Common myeloid progenitor, CD34-positive (primary cell): ENCODE measurements at regions of chr14 and their contacts with region 1.

Region 1: GRCh38 chr14:77988970-77989369 is 181.2 kb upstream of the NRXN3 start:
- DNase-seq: no peak
- H3K4me3 ChIP-seq: no peak overlapping the region
- H3K27ac ChIP-seq: no peak overlapping the region
- H3K4me1 ChIP-seq: peaks cover 6 to 26% (median 15%) of the 10 kb centered on the region in 4 experiments
- H3K27me3 ChIP-seq: no peaks in the 10 kb centered on the region

Region 2: GRCh38 chr14:77862154-77862786 is 126.7 kb before region 1 on chr14:
- CTCF ChIA-PET with region 1: interaction called, 35 read pairs
- POLR2A ChIA-PET with region 1: no interaction called
- DNase-seq: peak; percentile 61 to 72 (median 65)
- H3K4me3 ChIP-seq: no peak overlapping the region
- H3K27ac ChIP-seq: no peak overlapping the region
- H3K4me1 ChIP-seq: no peaks in the 10 kb centered on the region
- H3K27me3 ChIP-seq: no peaks in the 10 kb centered on the region